ENCODE measurements at regions of chr22 and their contacts with region 1.

Region 1: DNA sequence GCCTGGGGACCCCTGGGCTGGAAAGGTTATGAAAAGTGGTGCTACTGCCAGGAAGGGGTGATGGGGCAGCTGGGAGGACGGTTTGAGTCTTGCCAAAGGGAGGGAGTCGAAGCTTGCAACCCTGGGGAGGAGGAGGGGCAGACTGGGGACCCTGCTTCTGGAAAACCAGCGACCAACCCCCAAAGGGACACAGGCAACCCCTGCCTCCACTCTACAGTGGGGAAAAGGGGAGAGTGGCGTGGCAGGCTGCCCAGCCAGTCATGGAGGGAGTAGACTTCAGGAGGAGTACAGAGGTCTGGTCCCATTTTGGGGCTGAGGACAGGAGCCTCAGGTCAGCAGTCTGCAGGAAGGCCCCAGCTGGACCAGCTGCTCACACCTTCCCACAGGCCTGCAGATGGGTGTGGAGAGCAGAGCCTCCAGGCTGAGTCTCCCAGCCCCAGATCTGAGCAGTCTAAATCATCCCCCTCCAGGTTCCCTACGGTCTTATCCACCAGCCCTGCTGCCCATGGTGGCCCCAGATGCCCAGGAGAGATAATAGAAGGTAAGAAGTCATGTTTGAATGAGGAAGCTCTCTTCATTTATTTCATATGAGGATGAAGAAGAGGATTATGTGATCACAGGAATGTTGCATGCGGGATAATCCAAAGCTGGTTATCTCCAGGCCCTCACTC is 3.3 kb downstream of the DDT start:
- DNase-seq: no peak
- ATAC-seq: no peak
- H3K4me3 ChIP-seq: no peak overlapping the region
- H3K27ac ChIP-seq: peak overlapping the region in 1 of 4 donors; percentile 20
- H3K4me1 ChIP-seq: peaks cover 7% of the 10 kb centered on the region
- H3K27me3 ChIP-seq: no peaks in the 10 kb centered on the region
- CTCF ChIP-seq: no peak
- POLR2A ChIP-seq: no peak

Region 2: GRCh38 chr22:23925020-23925606 is 45.8 kb before region 1 on chr22:
- intact Hi-C with region 1: loop called (anchors 5 kb)
- DNase-seq: no peak
- ATAC-seq: no peak
- H3K4me3 ChIP-seq: no peak overlapping the region
- H3K27ac ChIP-seq: no peak overlapping the region
- H3K4me1 ChIP-seq: no peaks in the 10 kb centered on the region
- H3K27me3 ChIP-seq: no peaks in the 10 kb centered on the region
- CTCF ChIP-seq: no peak
- POLR2A ChIP-seq: no peak

Region 3: DNA sequence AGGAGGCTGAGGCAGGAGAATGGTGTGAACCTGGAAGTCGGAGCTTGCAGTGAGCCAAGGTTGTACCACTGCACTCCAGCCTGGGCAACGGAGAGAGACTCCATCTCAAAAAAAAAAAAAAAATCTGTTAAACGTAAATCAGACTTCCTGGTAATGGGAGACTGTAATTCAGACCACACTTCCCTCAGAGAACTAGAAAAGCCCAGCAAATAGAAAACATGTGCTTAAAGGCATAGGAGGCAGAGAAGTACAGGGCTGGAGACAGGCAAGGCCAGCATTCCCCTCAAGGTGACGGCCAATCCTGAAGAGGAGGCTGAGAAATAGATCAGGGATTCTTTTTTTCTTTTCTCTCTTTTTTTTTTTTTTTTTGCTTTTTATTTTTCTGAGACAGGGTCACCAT is 265.7 kb after region 1 on chr22:
- intact Hi-C with region 1: no loop called
- DNase-seq: no peak
- ATAC-seq: no peak
- H3K4me3 ChIP-seq: no peak overlapping the region
- H3K27ac ChIP-seq: no peak overlapping the region
- H3K4me1 ChIP-seq: no peaks in the 10 kb centered on the region
- H3K27me3 ChIP-seq: no peaks in the 10 kb centered on the region
- CTCF ChIP-seq: no peak
- POLR2A ChIP-seq: no peak

Measured in body of pancreas (tissue), 4 donors.